Activated T-helper 2 cell treated with anti-CD3 and anti-CD28 coated beads, Interferon-gamma antibody, Interleukin-2, Interleukin-4, amounts not matched to agents 10 μg/mL and 5 μg/mL and 100 μg/mL, durations not matched to agents 14 hours and 24 hours and 36 hours (primary cell): ENCODE measurements at regions of chr9 and their contacts with region 1.

Region 1: DNA sequence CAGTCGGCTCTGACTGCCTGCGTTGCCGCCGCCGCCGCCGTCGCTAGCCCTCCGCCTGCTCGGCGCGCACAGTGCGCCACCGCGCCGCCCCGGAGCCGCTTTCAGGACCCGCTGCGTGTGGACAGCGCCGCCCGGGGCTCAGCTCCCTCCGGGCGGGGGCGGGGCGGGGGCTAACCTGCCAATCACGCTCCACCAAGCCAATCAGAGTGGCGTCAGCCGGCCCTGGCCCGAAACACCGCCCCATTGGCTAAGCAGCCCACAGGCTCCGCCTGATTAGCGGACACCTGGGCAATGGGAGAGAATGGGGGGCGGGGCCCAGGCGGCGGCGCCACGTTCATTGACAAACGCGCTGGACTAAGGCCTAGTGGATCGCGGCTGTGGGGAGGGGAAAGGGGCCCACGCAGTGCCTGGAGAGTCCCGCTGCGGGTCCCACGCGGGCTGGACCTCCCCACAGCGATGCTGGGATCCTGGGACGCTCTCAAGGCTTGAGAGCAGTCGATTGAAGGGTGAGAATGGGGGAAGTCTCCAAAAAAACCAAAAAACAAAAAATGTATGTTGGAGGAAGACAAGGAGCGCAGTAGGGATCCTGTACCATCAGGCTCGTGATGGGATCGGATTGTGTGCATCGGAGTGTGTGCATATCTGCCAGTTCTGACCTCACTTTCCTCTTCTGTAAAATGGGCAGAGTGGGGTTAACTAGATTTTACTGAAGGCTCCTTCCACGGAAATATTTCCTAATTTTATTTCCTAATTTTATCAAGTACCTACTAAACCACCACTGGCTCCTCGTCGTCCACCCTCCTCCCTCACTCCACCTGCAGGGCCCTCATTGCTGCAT is 6.3 kb downstream of the PAX5 start:
- DNase-seq: peak; percentile 83
- H3K4me3 Mint-ChIP-seq: peak overlapping the region; percentile 70
- H3K27ac Mint-ChIP-seq: no peak overlapping the region
- H3K4me1 Mint-ChIP-seq: peaks cover 17% of the 10 kb centered on the region
- H3K27me3 Mint-ChIP-seq: peaks cover 84% of the 10 kb centered on the region

Region 2: DNA sequence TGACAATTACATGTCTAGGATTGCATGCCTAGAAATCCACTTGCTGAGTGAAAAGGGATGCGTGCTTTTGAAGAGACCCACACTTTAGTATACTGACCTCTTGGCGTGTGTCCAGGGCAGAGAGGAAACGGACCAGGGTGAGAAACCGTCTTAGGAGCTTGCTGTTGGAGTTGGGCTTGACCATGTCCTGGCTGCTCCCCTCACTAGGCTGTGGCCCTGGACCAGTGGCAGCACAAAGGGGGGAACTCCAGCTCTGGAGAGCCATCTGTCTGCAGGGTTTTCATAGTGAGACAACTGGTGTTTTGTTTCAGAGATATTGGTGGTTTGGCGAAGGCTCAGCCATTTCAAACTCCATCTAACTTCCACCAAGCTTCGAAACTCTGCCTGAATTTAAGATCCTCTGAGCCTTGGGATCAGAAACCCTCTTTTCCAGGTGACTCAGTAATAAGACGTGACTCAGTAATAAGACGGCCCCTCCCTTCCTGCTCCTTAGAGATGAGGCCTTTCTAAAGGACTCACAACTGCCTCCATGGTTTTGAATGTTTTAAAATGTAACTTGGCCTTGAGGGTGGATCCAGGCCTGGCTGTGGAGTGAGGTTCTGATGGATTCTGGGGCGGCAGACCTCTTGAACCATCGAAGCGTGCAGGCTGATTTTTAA is 289.4 kb before region 1 on chr9:
- intact Hi-C with region 1: no loop called
- DNase-seq: no peak
- H3K4me3 Mint-ChIP-seq: no peak overlapping the region
- H3K27ac Mint-ChIP-seq: no peak overlapping the region
- H3K4me1 Mint-ChIP-seq: no peaks in the 10 kb centered on the region
- H3K27me3 Mint-ChIP-seq: peaks cover 32% of the 10 kb centered on the region

Region 3: GRCh38 chr9:37010180-37010579 is 17.6 kb before region 1 on chr9:
- intact Hi-C with region 1: no loop called
- DNase-seq: no peak
- H3K4me3 Mint-ChIP-seq: no peak overlapping the region
- H3K27ac Mint-ChIP-seq: no peak overlapping the region
- H3K4me1 Mint-ChIP-seq: no peaks in the 10 kb centered on the region
- H3K27me3 Mint-ChIP-seq: peaks cover 37% of the 10 kb centered on the region

Region 4: GRCh38 chr9:37172557-37172956 is 144.8 kb after region 1 on chr9:
- intact Hi-C with region 1: no loop called
- DNase-seq: no peak
- H3K4me3 Mint-ChIP-seq: no peak overlapping the region
- H3K27ac Mint-ChIP-seq: no peak overlapping the region
- H3K4me1 Mint-ChIP-seq: peaks cover 7% of the 10 kb centered on the region
- H3K27me3 Mint-ChIP-seq: no peaks in the 10 kb centered on the region

Region 5: GRCh38 chr9:37329576-37329975 is 301.8 kb after region 1 on chr9:
- intact Hi-C with region 1: loop called (anchors 5 kb)
- DNase-seq: no peak
- H3K4me3 Mint-ChIP-seq: no peak overlapping the region
- H3K27ac Mint-ChIP-seq: no peak overlapping the region
- H3K4me1 Mint-ChIP-seq: peaks cover 1% of the 10 kb centered on the region
- H3K27me3 Mint-ChIP-seq: no peaks in the 10 kb centered on the region